Head of caudate nucleus (tissue), 42 donors: ENCODE measurements at regions of chr19 and their contacts with region 1.

Region 1: DNA sequence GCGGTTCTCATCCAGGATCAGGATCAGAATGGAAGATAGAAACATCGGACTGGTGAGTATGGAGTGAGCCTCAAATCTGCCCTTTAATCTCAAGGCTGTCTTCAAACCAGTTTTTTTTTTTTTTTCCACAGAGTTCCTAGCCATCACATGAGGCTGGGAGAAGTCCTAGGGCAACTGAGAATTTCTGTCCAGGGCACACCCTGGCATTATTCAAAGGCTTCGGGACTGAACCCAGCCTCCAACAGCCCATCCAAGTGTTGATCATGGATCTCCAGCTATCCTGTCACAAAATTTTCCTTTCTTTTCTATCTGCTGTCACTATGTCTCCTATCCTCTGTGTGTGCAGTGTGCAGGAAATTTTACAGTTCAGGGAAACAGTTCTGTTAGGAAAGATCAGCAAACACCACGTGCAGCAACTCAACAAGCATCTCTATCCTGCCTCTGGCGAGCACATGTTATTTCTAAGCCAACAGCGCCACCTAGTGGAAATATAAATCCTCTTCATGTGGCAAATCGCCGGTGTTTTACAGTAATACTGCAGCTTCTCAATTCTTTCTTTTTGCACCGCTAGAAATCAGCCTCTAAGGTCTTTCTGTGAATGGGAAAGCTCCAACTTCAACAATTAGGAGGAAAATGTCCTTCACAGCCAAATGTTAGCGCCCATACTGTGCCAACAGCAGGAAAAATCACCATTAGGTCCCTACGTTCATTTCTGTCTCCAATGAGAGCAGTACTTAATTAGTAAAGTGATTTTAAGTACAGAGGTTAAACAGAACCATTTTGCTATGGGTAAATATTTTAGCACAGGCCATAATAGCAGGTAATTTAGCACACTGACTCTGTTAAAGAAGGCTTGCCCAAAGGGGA is 21.4 kb upstream of the ZNF181 start:
- DNase-seq: peak in 35 of 42 donors; percentile 6 to 87 (median 53)

Region 2: DNA sequence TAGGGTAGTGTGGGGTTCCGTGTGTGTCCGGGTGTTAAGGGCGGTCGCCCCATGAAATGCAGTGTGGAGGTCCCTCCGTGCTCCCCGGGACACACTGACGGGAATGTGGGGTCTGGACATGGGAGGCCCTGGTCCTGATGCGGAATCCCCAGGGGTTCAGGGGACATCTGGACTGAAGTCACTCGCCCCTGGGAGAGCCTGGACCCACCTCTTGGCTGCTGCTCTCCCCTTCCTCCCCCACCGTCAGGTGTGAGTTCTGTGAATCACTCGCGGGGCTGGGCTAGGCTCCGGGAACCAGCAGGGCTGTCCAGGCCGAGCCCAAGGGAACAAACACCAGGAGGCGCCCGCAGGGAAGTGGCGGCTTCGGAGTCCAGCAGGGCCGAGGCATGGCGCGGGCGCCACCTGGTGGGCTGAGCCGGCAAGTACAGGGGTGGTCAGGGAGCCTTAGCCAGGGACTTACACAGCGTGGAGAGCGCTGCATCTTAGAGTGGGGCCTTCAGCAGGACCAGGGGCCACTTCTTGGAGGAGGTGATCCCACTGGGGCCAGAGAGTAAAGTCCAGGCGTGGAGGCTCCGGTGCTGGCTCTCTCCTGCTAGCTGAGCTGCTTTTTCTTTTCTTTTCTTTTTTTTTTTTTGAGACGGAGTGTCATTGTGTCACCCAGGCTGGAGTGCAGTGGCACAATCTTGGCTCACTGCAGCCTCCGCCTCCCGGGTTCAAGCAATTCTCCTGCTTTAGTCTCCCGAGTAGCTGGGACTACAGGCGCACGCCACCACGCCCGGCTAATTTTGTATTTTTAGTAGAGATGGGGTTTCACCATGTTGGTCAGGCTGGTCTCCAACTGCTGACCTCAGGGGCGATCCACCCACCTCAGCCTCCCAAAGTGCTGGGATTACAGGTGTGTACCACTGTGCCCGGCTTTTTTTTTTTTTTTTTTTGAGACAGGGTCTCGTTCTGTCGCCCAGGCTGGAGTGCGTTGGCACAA is 211.0 kb before region 1 on chr19:
- intact Hi-C with region 1: loop called (anchors 2 kb)
- DNase-seq: peak; percentile 63 to 97 (median 92)

Region 3: DNA sequence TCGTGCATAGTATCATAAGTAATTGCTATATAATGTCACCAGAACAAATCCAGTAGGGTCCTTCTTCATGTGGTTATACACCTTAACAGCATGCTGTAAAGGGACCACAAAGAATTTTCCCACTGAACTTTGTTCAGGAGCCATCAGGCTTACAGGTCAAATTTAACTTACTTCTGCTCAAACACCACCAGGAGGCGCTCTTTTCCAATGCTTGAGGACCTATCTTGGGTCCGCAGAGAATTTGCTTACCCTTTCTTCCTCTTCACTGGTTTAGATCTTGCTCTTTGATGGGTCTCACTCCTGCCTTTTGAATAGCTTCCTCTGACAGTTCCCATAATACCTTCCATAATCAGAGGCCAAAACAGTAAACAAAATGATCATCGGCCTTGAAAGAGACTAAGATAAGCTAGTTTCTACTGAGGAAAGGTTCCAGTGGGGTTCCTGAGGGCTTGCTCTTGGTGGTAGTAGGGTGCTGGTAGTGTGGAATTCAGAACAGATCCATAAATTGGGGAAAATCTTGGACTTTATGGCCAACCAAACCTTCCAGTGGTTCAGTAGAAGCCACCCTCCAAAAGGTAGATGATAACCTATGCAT is 73.0 kb before region 1 on chr19:
- intact Hi-C with region 1: loop called (anchors 5 kb)
- DNase-seq: peak in 34 of 42 donors; percentile 11 to 88 (median 54)